Endothelial cell of umbilical vein (primary cell): ENCODE measurements at regions of chr6 and their contacts with region 1.

Region 1: GRCh38 chr6:144013486-144013909 is 5.4 kb upstream of the PLAGL1 start:
- DNase-seq: peak; percentile 77
- H3K4me3 ChIP-seq: no peak overlapping the region
- H3K27ac ChIP-seq: no peak overlapping the region
- H3K4me1 ChIP-seq: no peaks in the 10 kb centered on the region
- H3K27me3 ChIP-seq: peaks cover 11 to 16% of the 10 kb centered on the region in 2 experiments
- CTCF ChIP-seq: peak; percentile 80 to 83
- POLR2A ChIP-seq: no peak

Region 2: DNA sequence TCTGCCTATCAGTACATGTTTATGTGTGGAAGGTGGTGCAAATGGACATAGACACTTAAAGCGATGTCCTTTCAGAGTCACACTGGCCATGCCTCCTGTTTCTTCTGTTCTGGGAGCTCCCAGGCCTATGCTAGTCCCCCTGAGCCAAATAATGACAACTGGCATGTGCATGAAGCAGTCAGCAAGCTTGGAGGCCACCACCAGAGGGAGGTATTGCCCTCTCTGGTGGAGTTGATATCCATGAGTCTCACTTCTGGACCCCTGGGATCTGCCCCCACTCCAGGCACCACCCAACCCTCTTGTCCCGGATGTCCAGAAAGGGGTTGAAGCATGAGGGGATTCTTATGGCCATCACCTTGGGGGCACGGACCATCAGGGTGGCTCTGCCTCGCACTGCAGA is 780.6 kb before region 1 on chr6:
- CTCF ChIA-PET with region 1: interaction called, 4 read pairs
- POLR2A ChIA-PET with region 1: no interaction called
- dilution Hi-C with region 1: no loop called
- intact Hi-C with region 1: loop called (anchors 5 kb)
- DNase-seq: peak; percentile 44
- H3K4me3 ChIP-seq: no peak overlapping the region
- H3K27ac ChIP-seq: no peak overlapping the region
- H3K4me1 ChIP-seq: no peaks in the 10 kb centered on the region
- H3K27me3 ChIP-seq: no peaks in the 10 kb centered on the region
- CTCF ChIP-seq: peak; percentile 52 to 65
- POLR2A ChIP-seq: no peak

Region 3: GRCh38 chr6:143510991-143511891 is 502.3 kb before region 1 on chr6 and contains the start of gene FUCA2:
- CTCF ChIA-PET with region 1: interaction called, 22 read pairs
- POLR2A ChIA-PET with region 1: no interaction called
- dilution Hi-C with region 1: no loop called
- intact Hi-C with region 1: loop called (anchors 1 kb)
- DNase-seq: peak; percentile 81
- H3K4me3 ChIP-seq: peak within 1 kb of the TSS; percentile 48 to 82 (median 53)
- H3K27ac ChIP-seq: peak within 1 kb of the TSS; percentile 69
- H3K4me1 ChIP-seq: peaks cover 18% of the 10 kb centered on the region
- H3K27me3 ChIP-seq: peaks cover 6 to 12% of the 10 kb centered on the region in 2 experiments
- CTCF ChIP-seq: peak in 1 of 2 donors; percentile 14
- POLR2A ChIP-seq: peak; percentile 88
- total RNA-seq, gene FUCA2: 80.9 and 85.0 TPM in 2 replicates

Region 4: DNA sequence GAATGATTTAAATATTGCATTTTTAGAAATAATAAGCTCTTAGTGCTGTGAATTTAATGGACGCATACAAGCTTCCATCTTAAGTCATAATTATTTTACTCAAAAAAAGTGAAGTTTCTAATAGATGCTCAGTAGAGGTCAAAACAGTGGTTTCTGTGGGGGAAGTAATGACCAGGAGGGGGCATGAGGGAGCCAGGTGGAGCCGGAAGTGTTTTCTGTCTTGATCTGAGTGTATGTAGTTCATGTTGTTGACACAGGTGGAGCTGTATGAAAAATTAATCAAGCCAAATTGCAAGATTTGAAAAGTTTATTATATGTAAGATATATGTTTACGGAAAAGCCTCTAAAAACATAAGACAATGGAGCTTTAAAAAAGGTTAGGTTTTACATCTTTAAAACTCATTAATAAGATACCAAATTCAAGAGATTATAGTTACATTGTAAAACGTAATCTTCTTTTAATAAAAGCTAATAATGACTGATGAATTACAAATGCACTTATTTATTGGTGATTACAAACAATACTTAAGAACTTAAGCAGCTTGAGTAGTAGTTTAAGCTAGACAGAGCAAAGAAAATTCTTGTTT is 73.4 kb before region 1 on chr6:
- CTCF ChIA-PET with region 1: interaction called, 8 read pairs
- POLR2A ChIA-PET with region 1: no interaction called
- dilution Hi-C with region 1: no loop called
- intact Hi-C with region 1: loop called (anchors 1 kb)
- DNase-seq: peak; percentile 45
- H3K4me3 ChIP-seq: no peak overlapping the region
- H3K27ac ChIP-seq: no peak overlapping the region
- H3K4me1 ChIP-seq: no peaks in the 10 kb centered on the region
- H3K27me3 ChIP-seq: peaks cover under 1 to 7% of the 10 kb centered on the region in 2 experiments
- CTCF ChIP-seq: peak; percentile 59 to 60
- POLR2A ChIP-seq: no peak

Region 5: GRCh38 chr6:144027932-144028587 is 14.6 kb after region 1 on chr6:
- CTCF ChIA-PET with region 1: interaction called, 10 read pairs
- POLR2A ChIA-PET with region 1: no interaction called
- dilution Hi-C with region 1: no loop called
- intact Hi-C with region 1: no loop called
- DNase-seq: no peak
- H3K4me3 ChIP-seq: no peak overlapping the region
- H3K27ac ChIP-seq: no peak overlapping the region
- H3K4me1 ChIP-seq: no peaks in the 10 kb centered on the region
- H3K27me3 ChIP-seq: peaks cover 7 to 10% of the 10 kb centered on the region in 2 experiments
- CTCF ChIP-seq: no peak
- POLR2A ChIP-seq: no peak